ENCODE measurements at regions of chr14 and their contacts with region 1.

Region 1: GRCh38 chr14:74571901-74572725 is 39.9 kb downstream of the LTBP2 start:
- DNase-seq: peak; percentile 87 to 100
- H3K4me3 ChIP-seq: peak overlapping the region; percentile 52
- H3K27ac ChIP-seq: peak overlapping the region; percentile 99
- H3K4me1 ChIP-seq: peaks cover 92% of the 10 kb centered on the region
- H3K27me3 ChIP-seq: no peaks in the 10 kb centered on the region
- CTCF ChIP-seq: no peak

Region 2: DNA sequence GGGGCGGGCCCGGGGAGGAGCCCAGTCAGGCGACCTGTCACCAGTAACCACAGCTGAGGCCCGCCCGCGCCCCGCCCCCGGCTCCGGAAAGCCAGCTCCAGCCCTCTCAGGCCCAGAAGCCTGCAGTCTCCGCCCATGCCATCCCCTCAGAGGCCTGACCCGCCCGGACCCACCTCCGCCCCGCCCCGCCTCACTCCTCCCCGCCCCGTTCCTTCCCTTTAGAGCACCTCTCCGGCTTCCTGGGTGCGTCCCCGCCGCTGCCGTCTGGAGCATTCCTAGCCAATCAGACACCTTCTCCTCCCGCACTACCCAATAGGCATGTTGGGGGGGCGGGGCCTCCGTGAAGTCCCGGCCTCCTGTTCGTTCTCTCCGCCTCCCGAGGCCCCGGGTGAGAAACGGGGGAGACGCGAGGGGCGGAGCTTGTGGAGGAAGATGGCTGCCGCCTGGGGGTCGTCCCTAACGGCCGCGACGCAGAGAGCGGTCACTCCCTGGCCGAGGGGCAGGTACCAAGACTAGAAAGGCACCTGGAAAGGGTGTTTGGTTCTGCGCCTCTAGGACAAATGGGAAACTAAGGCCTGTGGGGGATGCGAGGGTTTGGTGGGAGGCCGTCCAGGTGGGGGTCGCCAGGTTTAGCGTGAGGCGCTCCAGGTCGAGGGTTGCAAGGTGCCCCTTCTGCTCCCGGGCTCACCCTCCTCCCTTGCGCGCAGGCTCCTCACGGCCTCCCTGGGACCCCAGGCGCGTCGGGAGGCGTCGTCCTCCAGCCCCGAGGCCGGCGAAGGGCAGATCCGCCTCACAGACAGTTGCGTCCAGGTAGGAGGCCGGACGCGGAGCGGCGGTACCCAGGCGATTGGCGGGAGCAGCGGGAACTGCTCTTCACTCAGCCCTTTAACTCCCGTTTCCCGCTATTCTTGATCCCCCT is 78.5 kb before region 1 on chr14 and contains the start of gene ISCA2:
- CTCF ChIA-PET with region 1: interaction called, 6 read pairs
- POLR2A ChIA-PET with region 1: interaction called, 16 read pairs
- intact Hi-C with region 1: loop called (anchors 1 kb)
- DNase-seq: peak; percentile 100
- H3K4me3 ChIP-seq: peak within 1 kb of the TSS; percentile 81
- H3K27ac ChIP-seq: peak within 1 kb of the TSS; percentile 54
- H3K4me1 ChIP-seq: peaks cover 52% of the 10 kb centered on the region
- H3K27me3 ChIP-seq: no peaks in the 10 kb centered on the region
- CTCF ChIP-seq: no peak
- total RNA-seq, gene ISCA2: 83.2 and 86.5 TPM in 2 replicates

Region 3: GRCh38 chr14:74618078-74618952 is 46.2 kb after region 1 on chr14:
- CTCF ChIA-PET with region 1: interaction called, 82 read pairs
- POLR2A ChIA-PET with region 1: interaction called, 8 read pairs
- intact Hi-C with region 1: loop called (anchors 1 kb)
- DNase-seq: peak; percentile 67 to 100
- H3K4me3 ChIP-seq: no peak overlapping the region
- H3K27ac ChIP-seq: peak overlapping the region; percentile 84
- H3K4me1 ChIP-seq: peaks cover 99% of the 10 kb centered on the region
- H3K27me3 ChIP-seq: no peaks in the 10 kb centered on the region
- CTCF ChIP-seq: no peak

Region 4: DNA sequence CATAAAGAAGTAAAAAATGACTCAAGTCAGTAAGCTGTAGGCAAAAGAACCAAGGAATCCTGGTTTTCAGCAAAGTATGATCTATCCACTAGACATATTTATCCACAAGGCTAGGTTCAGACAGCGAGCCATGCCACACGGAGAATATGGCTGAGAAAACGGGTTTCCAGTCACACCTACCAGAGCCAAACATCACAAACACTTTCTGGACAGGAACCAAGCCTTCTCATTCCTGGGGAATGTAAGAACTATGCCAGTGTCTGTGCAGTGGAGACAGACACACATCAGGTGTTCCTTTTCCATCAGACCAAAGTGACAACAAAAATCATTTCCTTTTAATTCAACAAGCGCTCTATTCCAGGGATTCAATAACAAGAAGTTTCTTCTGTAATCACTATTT is 99.7 kb after region 1 on chr14:
- CTCF ChIA-PET with region 1: no interaction called
- POLR2A ChIA-PET with region 1: no interaction called
- intact Hi-C with region 1: loop called (anchors 2 kb)
- DNase-seq: peak in 1 of 2 experiments; percentile 80
- H3K4me3 ChIP-seq: no peak overlapping the region
- H3K27ac ChIP-seq: no peak overlapping the region
- H3K4me1 ChIP-seq: no peaks in the 10 kb centered on the region
- H3K27me3 ChIP-seq: no peaks in the 10 kb centered on the region
- CTCF ChIP-seq: no peak

Region 5: GRCh38 chr14:75084513-75084912 is 512.4 kb after region 1 on chr14:
- CTCF ChIA-PET with region 1: no interaction called
- POLR2A ChIA-PET with region 1: no interaction called
- intact Hi-C with region 1: no loop called
- DNase-seq: peak in 1 of 2 experiments; percentile 34
- H3K4me3 ChIP-seq: no peak overlapping the region
- H3K27ac ChIP-seq: no peak overlapping the region
- H3K4me1 ChIP-seq: no peaks in the 10 kb centered on the region
- H3K27me3 ChIP-seq: no peaks in the 10 kb centered on the region
- CTCF ChIP-seq: peak; percentile 59

Region 6: GRCh38 chr14:75278422-75279161 is 706.5 kb after region 1 on chr14 and contains the start of gene FOS:
- CTCF ChIA-PET with region 1: no interaction called
- POLR2A ChIA-PET with region 1: no interaction called
- intact Hi-C with region 1: loop called (anchors 5 kb)
- DNase-seq: peak; percentile 92 to 98
- H3K4me3 ChIP-seq: peak within 1 kb of the TSS; percentile 90
- H3K27ac ChIP-seq: peak within 1 kb of the TSS; percentile 95
- H3K4me1 ChIP-seq: peaks cover 51% of the 10 kb centered on the region
- H3K27me3 ChIP-seq: no peaks in the 10 kb centered on the region
- CTCF ChIP-seq: no peak
- total RNA-seq, gene FOS: 84.6 and 154 TPM in 2 replicates

Measured in PC-9 (cell line).